Mammary epithelial cell (primary cell): ENCODE measurements at regions of chr6 and their contacts with region 1.

Region 1: GRCh38 chr6:52399511-52400312 is 20.4 kb upstream of the EFHC1 start:
- DNase-seq: peak; percentile 60
- H3K4me3 ChIP-seq: no peak overlapping the region
- H3K27ac ChIP-seq: no peak overlapping the region
- H3K4me1 ChIP-seq: peaks cover 8% of the 10 kb centered on the region
- H3K27me3 ChIP-seq: no peaks in the 10 kb centered on the region
- CTCF ChIP-seq: peak; percentile 89 to 91

Region 2: DNA sequence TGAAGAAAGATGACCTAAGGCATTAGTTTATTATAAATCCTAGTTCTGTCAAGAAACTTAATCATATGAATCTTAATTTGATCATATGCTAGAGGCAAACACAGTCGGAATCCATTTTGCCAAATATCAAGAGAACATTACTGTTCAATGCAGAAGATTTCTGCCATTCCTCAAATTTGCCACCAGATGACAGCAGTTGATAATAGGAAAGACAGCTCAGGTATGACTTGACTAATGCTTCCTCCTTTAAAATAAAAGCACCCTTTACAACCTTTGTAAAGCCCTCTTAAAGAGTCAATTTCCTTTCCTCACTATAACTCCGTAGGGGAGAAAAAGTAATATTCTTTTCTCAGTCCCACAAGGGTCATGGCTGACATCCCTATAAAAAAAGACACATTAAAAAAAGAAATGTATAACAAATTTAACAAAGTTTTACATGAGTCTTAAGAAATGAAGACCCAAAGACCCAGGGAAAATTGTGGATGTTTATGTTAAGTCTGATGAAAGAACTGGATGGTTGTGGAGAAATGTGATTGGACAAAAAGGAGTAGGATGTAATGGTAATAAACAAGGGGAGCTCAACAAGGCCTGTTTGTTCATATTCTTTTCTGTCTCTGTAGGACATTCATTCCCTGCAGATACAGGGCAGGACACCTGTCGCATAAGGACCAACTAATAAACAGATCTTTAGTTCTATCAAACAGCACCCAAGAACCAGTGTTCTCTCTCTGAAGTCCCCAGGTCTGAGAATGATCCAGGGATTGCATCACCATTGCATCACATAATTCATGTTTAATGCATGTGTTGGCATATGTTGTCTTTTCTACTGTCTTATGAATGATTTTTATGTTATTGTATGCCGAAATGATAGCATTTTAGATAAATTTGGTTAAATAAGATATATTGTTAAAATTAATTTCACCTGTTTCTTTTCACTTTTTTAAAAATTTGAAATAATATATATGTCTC is 236.5 kb before region 1 on chr6:
- CTCF ChIA-PET with region 1: no interaction called
- dilution Hi-C with region 1: no loop called
- in situ Hi-C with region 1: loop called (anchors 10 kb)
- intact Hi-C with region 1: loop called (anchors 1 kb)
- DNase-seq: peak; percentile 34
- H3K4me3 ChIP-seq: no peak overlapping the region
- H3K27ac ChIP-seq: no peak overlapping the region
- H3K4me1 ChIP-seq: peaks cover under 1% of the 10 kb centered on the region
- H3K27me3 ChIP-seq: no peaks in the 10 kb centered on the region
- CTCF ChIP-seq: peak; percentile 93 to 97

Region 3: DNA sequence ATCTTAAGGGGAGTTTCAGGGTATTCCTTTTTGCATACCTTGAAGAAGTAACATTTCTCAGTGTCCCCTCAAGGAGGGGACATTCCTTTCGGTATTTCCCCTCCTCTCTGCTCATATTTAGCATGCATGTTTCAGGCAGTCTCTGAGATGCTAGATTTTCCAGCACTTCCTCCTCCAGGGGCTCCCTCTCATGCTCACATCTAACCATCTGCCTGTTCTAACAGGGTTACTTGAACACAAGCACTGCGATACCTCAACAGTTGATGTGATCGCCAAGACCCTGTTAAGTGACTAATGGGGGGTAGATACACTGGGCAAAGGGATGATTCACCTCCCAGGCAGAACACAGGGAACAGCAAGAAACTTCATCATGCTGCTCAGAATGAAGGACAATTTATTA is 102.3 kb before region 1 on chr6:
- CTCF ChIA-PET with region 1: no interaction called
- dilution Hi-C with region 1: no loop called
- in situ Hi-C with region 1: loop called (anchors 5 kb)
- intact Hi-C with region 1: no loop called
- DNase-seq: no peak
- H3K4me3 ChIP-seq: no peak overlapping the region
- H3K27ac ChIP-seq: no peak overlapping the region
- H3K4me1 ChIP-seq: no peaks in the 10 kb centered on the region
- H3K27me3 ChIP-seq: no peaks in the 10 kb centered on the region
- CTCF ChIP-seq: no peak

Region 4: DNA sequence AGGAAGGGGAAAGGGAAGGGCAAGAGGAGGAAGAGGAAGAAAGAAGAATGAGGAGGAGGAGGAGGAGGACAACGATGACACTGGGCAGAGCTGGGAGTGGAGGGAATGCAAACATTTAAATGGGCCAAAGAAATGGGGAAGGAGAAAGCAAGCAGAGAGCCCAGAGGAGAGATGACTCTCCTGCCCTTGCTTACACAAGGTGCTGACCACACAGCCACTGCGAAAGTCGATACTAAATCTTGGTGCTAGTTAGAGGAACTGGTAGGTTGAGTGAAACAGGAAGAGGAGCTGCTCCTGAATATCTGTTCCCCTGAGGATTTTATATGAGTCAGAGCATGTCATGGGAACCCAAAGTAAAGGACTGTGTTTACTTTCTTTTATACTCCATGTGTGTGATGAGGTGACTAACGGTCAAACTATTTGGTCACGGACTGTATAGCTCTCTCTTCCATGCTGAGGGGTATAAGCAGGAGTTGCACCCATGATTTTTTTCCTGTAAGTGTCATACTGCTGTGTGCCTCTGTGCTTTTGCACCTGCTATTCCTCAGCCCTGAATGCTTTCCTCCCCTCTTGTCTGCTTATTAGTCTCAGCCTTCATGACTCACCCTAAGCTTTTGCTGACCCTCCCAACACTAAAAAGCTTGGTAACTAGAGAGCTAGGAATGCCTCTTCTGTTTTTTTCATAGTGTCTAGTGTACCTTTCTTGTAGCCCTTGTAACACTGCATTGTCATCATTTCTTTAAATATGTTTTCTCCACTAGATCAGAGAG is 47.3 kb before region 1 on chr6:
- CTCF ChIA-PET with region 1: no interaction called
- dilution Hi-C with region 1: no loop called
- in situ Hi-C with region 1: no loop called
- intact Hi-C with region 1: loop called (anchors 1 kb)
- DNase-seq: peak; percentile 96
- H3K4me3 ChIP-seq: no peak overlapping the region
- H3K27ac ChIP-seq: peak overlapping the region; percentile 86
- H3K4me1 ChIP-seq: peaks cover 19% of the 10 kb centered on the region
- H3K27me3 ChIP-seq: no peaks in the 10 kb centered on the region
- CTCF ChIP-seq: no peak

Region 5: GRCh38 chr6:52361945-52362442 is 37.7 kb before region 1 on chr6 and contains the start of gene PAQR8:
- CTCF ChIA-PET with region 1: no interaction called
- dilution Hi-C with region 1: no loop called
- in situ Hi-C with region 1: no loop called
- intact Hi-C with region 1: loop called (anchors 2 kb)
- DNase-seq: peak; percentile 36
- H3K4me3 ChIP-seq: peak within 1 kb of the TSS; percentile 59 to 72 (median 68)
- H3K27ac ChIP-seq: no peak within 1 kb of the TSS
- H3K4me1 ChIP-seq: peaks cover 14% of the 10 kb centered on the region
- H3K27me3 ChIP-seq: no peaks in the 10 kb centered on the region
- CTCF ChIP-seq: no peak
- total RNA-seq, gene PAQR8: 0.17 to 3.4 TPM